Breast epithelium (tissue), 4 donors: ENCODE measurements at regions of chr12 and their contacts with region 1.

Region 1: DNA sequence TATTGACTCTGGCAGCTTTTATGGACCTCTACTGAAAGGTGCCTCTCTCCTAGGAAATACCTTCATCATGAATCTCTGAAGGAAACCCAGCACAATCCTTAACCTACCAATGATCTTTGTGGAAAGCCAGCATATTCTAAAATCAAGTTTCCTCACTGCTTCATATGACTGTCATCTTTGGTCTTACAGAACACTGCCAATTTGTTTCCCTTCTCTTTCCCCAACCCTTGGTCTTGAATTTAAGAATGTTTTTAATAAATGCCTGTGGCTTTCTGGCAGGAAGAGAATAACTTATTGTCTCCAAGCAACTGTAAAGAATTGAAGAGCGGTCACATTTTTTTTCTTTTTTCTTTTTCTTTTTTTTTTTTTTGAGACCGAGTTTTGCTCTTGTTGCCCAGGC is 427.6 kb downstream of the IPO8 start:
- DNase-seq: no peak
- H3K4me3 ChIP-seq: no peak overlapping the region
- H3K27ac ChIP-seq: no peak overlapping the region
- H3K4me1 ChIP-seq: no peaks in the 10 kb centered on the region
- H3K27me3 ChIP-seq: no peaks in the 10 kb centered on the region
- CTCF ChIP-seq: no peak
- POLR2A ChIP-seq: no peak

Region 2: DNA sequence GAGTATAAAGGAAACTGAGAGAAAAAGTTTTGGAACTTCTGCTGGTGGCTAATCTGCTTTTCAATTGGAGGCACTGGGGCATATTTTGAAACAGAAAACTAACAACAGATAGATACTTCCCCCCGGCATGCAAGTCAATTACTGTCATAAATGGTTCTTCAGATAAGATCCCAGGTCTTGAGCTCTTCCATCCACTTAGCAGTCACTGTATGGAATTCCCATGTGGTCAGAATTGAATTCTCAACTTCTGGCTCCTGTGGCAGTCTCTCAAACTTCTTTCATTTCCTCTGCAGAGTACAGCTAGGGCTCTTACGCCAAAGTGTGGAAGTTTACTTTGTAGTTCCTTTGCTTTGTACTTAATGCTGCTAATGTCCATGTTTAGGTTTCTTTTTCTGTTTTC is 24.6 kb before region 1 on chr12:
- intact Hi-C with region 1: no loop called
- DNase-seq: no peak
- H3K4me3 ChIP-seq: no peak overlapping the region
- H3K27ac ChIP-seq: no peak overlapping the region
- H3K4me1 ChIP-seq: no peaks in the 10 kb centered on the region
- H3K27me3 ChIP-seq: no peaks in the 10 kb centered on the region
- CTCF ChIP-seq: no peak
- POLR2A ChIP-seq: no peak

Region 3: GRCh38 chr12:30314506-30315100 is 46.6 kb after region 1 on chr12:
- intact Hi-C with region 1: loop called (anchors 2 kb)
- DNase-seq: no peak
- H3K4me3 ChIP-seq: no peak overlapping the region
- H3K27ac ChIP-seq: no peak overlapping the region
- H3K4me1 ChIP-seq: no peaks in the 10 kb centered on the region
- H3K27me3 ChIP-seq: no peaks in the 10 kb centered on the region
- CTCF ChIP-seq: no peak
- POLR2A ChIP-seq: no peak